ENCODE measurements at regions of chr1 and their contacts with region 1.

Region 1: DNA sequence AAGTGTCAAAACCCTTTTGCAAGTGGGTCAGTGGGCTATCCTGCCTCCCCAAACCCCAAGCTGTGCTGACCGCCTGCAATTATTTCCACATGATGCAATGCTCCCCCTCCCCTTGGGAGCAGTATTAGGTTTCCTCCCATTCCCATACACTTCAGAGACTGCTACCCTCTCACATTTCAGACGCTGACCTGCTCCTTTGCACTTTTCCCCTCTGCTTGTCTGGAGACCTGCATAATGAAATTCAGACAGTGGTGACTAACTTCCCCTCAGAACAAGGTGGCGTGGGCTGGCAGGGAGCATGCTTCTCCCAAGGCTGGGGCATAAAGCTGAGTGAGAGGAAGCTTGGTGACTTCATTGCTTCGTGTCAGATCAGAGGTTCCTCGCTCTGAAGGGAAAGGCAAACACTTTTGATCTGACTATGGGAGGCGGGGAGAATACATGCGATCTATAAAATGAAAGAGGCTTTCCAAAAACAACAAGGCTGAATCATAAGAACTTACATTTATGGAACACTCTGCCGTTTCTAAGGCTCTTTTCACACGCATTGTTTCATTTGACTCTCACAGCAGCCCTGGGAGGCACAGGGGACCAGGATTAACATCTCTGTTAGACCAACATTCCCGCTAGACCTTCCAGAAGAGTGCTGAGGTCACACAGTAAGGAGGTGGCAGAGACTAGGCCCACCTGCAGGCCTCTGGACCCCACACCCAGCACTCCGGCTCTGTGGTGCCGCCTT is 27.5 kb upstream of the ROR1 start:
- DNase-seq: peak; percentile 99
- H3K4me3 ChIP-seq: no peak overlapping the region
- H3K27ac ChIP-seq: peak overlapping the region; percentile 97
- H3K4me1 ChIP-seq: peaks cover 25% of the 10 kb centered on the region
- H3K27me3 ChIP-seq: no peaks in the 10 kb centered on the region
- CTCF ChIP-seq: no peak
- POLR2A ChIP-seq: no peak

Region 2: DNA sequence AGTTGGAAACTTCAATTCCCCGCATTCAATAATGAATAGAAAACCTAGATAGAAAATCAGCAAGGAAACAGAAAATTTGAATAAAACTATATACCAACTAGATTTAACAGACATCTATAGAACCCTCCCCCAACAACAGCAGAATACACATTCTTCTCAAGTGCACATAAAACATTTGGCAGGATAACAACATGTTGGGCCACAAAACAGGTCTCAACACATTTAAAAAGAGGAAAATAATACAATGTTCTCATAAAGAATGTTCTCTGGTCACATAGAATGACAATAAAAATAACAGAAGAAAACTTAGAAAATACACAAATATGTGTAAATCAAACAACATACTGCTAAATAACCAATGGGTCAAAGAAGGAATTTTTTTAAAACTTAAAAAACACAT is 248.2 kb before region 1 on chr1:
- CTCF ChIA-PET with region 1: no interaction called
- POLR2A ChIA-PET with region 1: no interaction called
- dilution Hi-C with region 1: no loop called
- intact Hi-C with region 1: no loop called
- DNase-seq: no peak
- H3K4me3 ChIP-seq: no peak overlapping the region
- H3K27ac ChIP-seq: no peak overlapping the region
- H3K4me1 ChIP-seq: no peaks in the 10 kb centered on the region
- H3K27me3 ChIP-seq: no peaks in the 10 kb centered on the region
- CTCF ChIP-seq: no peak
- POLR2A ChIP-seq: no peak

Region 3: GRCh38 chr1:63537940-63538339 is 208.4 kb before region 1 on chr1:
- CTCF ChIA-PET with region 1: no interaction called
- POLR2A ChIA-PET with region 1: no interaction called
- dilution Hi-C with region 1: no loop called
- intact Hi-C with region 1: no loop called
- DNase-seq: peak; percentile 24
- H3K4me3 ChIP-seq: no peak overlapping the region
- H3K27ac ChIP-seq: no peak overlapping the region
- H3K4me1 ChIP-seq: no peaks in the 10 kb centered on the region
- H3K27me3 ChIP-seq: no peaks in the 10 kb centered on the region
- CTCF ChIP-seq: peak; percentile 12 to 20
- POLR2A ChIP-seq: no peak

Region 4: GRCh38 chr1:63705078-63705477 is 41.2 kb before region 1 on chr1:
- CTCF ChIA-PET with region 1: no interaction called
- POLR2A ChIA-PET with region 1: no interaction called
- dilution Hi-C with region 1: no loop called
- intact Hi-C with region 1: loop called (anchors 2 kb)
- DNase-seq: no peak
- H3K4me3 ChIP-seq: no peak overlapping the region
- H3K27ac ChIP-seq: no peak overlapping the region
- H3K4me1 ChIP-seq: peaks cover 16% of the 10 kb centered on the region
- H3K27me3 ChIP-seq: peaks cover 0 to 5% of the 10 kb centered on the region in 2 experiments
- CTCF ChIP-seq: no peak
- POLR2A ChIP-seq: no peak

Region 5: DNA sequence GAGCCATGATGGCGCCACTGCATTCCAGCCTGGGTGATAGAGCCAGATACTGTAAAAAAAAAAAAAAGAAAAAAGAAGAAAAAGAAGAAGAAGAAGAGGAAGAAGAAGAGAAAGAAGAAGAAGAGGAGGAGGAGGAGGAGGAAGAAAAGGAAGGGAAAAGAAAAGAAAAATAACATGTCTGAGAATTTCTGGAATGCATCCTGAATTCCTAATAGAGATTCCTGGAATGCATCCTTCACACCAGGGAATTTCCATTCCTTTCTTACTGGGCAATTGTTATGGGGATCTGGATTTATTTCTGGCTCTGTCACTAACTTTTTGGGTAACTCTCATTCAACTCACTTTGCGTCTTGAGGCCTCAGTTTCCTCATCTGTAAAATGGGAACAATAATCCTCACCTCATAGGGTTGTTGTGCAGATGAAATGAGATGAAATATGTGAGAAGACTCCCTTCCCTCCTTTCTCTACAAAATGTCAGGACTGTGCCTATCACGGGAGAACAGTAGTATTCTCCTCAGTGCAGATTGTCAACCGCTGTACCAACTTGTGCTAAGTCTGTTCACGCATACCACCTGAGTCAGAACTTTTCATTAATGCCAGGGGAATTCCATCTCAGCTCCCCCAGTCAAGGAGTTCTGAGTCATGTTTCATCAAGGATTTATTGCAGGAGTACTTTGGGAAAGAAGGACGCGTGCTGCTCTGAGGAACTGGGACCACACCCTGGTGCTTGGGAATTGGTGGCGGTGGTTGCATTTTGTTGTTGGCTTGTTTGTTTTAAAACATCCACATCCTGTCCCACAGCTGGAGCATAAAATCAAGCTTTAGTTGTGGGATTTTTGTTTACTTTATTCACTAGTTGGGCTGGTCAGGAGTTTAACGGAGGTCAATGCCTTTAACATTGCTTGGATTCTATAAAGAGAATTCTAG is 14.9 kb before region 1 on chr1:
- CTCF ChIA-PET with region 1: interaction called, 4 read pairs
- POLR2A ChIA-PET with region 1: interaction called, 3 read pairs
- dilution Hi-C with region 1: no loop called
- intact Hi-C with region 1: loop called (anchors 1 kb)
- DNase-seq: peak; percentile 88
- H3K4me3 ChIP-seq: no peak overlapping the region
- H3K27ac ChIP-seq: peak overlapping the region; percentile 69
- H3K4me1 ChIP-seq: peaks cover 12% of the 10 kb centered on the region
- H3K27me3 ChIP-seq: no peaks in the 10 kb centered on the region
- CTCF ChIP-seq: no peak
- POLR2A ChIP-seq: no peak

Region 6: GRCh38 chr1:63773815-63774616 is 27.7 kb after region 1 on chr1 and contains the start of gene ROR1:
- CTCF ChIA-PET with region 1: interaction called, 10 read pairs
- POLR2A ChIA-PET with region 1: no interaction called
- dilution Hi-C with region 1: no loop called
- intact Hi-C with region 1: loop called (anchors 1 kb)
- DNase-seq: peak; percentile 86
- H3K4me3 ChIP-seq: peak within 1 kb of the TSS; percentile 62 to 73 (median 72)
- H3K27ac ChIP-seq: peak within 1 kb of the TSS; percentile 40
- H3K4me1 ChIP-seq: peaks cover 15% of the 10 kb centered on the region
- H3K27me3 ChIP-seq: peaks cover 0 to 5% of the 10 kb centered on the region in 2 experiments
- CTCF ChIP-seq: peak; percentile 42 to 80
- POLR2A ChIP-seq: no peak
- total RNA-seq, gene ROR1: 3.5 and 10.9 TPM in 2 replicates

Region 7: GRCh38 chr1:63847308-63847910 is 101.1 kb after region 1 on chr1:
- CTCF ChIA-PET with region 1: no interaction called
- POLR2A ChIA-PET with region 1: no interaction called
- dilution Hi-C with region 1: no loop called
- intact Hi-C with region 1: no loop called
- DNase-seq: no peak
- H3K4me3 ChIP-seq: no peak overlapping the region
- H3K27ac ChIP-seq: no peak overlapping the region
- H3K4me1 ChIP-seq: no peaks in the 10 kb centered on the region
- H3K27me3 ChIP-seq: no peaks in the 10 kb centered on the region
- CTCF ChIP-seq: no peak
- POLR2A ChIP-seq: no peak

Region 8: GRCh38 chr1:64006276-64007051 is 260.2 kb after region 1 on chr1:
- CTCF ChIA-PET with region 1: no interaction called
- POLR2A ChIA-PET with region 1: no interaction called
- dilution Hi-C with region 1: no loop called
- intact Hi-C with region 1: loop called (anchors 5 kb)
- DNase-seq: peak; percentile 84
- H3K4me3 ChIP-seq: no peak overlapping the region
- H3K27ac ChIP-seq: peak overlapping the region; percentile 57
- H3K4me1 ChIP-seq: peaks cover 14% of the 10 kb centered on the region
- H3K27me3 ChIP-seq: peaks cover 0 to 1% of the 10 kb centered on the region in 2 experiments
- CTCF ChIP-seq: no peak
- POLR2A ChIP-seq: no peak

Measured in endothelial cell of umbilical vein (primary cell).